Thyroid gland (tissue), 4 donors: ENCODE measurements at regions of chr1 and their contacts with region 1.

Region 1: DNA sequence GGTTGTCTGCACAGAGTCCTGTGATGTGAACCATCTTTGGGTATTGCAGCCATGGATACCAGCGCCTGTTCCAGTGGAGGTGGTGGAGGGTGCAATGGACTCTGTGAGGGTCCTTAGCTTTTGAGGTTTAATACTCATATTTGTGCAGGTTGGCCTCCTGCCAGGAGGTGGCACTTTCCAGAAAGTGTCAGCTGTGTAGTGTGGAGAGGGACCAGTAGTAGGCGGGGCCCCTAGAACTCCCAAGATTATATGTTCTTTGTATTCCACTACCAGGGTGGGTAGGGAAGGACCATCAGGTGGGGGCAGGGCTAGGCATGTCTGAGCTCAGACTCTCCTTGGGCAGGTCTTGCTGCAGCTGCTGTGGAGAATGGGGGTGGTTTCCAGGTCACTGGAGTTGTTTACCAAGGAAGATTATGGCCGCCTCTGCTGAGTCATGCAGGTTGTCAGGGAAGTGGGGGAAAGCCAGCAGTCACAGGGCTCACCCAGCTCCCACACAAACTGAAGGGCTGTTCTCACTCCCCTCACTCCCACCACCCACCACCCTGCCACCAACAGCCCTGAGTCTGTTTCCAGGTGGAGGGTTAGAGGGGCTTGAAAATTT is 31.2 kb upstream of the ZNF678 start:
- DNase-seq: no peak
- H3K4me3 ChIP-seq: no peak overlapping the region
- H3K27ac ChIP-seq: no peak overlapping the region
- H3K4me1 ChIP-seq: no peaks in the 10 kb centered on the region
- H3K27me3 ChIP-seq: no peaks in the 10 kb centered on the region
- CTCF ChIP-seq: no peak
- POLR2A ChIP-seq: no peak

Region 2: GRCh38 chr1:227654858-227655752 is 123.0 kb after region 1 on chr1:
- intact Hi-C with region 1: loop called (anchors 10 kb)
- DNase-seq: no peak
- H3K4me3 ChIP-seq: no peak overlapping the region
- H3K27ac ChIP-seq: no peak overlapping the region
- H3K4me1 ChIP-seq: no peaks in the 10 kb centered on the region
- H3K27me3 ChIP-seq: no peaks in the 10 kb centered on the region
- CTCF ChIP-seq: no peak
- POLR2A ChIP-seq: no peak